ACHN (cell line): ENCODE measurements at regions of chr7 and their contacts with region 1.

Region 1: GRCh38 chr7:116588641-116589594 is 64.1 kb downstream of the CAV1 start:
- DNase-seq: peak; percentile 82

Region 2: DNA sequence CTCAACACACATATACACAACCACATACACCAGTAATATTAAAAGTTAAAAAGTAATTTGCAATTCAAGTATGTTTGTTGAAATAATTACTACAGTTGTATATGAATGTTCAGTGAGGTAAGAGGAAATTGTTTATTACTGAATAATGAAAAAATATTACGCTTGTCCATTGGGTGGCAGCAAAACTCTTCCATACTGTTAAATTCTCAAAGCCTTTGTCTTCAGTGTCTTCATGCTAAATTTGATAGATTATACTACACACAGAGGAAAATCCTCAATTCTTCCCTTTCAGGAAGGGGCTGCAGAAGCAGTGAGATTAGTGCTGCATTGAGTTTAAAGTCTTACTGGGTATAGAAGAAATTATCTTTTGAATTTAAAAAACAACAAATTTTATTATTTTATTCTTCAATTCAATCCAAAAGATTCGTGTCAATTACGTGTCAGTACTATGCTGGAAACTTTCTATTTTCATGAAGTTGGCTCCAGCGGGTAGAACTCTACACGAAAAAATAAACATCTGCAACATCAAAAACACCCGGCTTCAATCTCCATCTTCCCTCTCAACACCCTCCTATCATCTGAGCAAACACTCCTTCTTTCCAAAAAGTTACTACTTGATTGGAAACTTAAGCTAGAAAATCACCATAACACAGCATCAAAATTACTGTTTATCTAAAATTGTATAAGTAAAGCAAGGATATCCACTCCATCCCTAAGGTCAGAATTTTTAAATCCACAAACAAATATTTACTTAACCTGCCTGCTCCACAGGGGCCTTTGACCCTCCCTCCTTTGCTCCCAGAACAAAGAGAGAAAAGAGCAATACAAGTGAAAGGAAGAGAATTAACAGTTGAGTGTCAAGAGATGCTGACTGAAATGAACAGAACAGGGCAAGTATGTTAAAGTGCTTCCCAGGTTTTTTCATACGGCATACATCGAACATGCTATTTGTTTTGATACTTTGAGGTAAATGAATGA is 415.6 kb before region 1 on chr7:
- in situ Hi-C with region 1: loop called (anchors 25 kb)
- DNase-seq: peak; percentile 82

Region 3: DNA sequence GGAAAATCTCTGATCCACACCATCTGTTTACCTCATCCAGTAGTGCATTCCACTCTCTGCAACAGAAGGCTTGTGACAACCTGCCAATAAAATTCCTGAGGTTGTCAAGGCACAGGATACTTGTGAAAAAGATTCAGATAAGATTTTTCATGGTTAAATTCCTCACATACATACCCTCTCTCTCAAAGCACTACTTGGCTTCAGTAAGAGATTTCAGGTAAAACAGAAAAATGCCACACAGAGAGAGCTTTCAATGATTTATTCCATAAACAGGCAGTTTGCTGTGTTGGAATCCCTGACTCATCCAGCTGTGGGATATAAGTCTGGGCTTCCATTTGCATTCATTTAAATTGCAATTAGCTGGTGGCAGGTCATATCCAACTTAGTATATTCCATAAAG is 189.1 kb before region 1 on chr7:
- in situ Hi-C with region 1: no loop called
- DNase-seq: peak; percentile 97

Region 4: DNA sequence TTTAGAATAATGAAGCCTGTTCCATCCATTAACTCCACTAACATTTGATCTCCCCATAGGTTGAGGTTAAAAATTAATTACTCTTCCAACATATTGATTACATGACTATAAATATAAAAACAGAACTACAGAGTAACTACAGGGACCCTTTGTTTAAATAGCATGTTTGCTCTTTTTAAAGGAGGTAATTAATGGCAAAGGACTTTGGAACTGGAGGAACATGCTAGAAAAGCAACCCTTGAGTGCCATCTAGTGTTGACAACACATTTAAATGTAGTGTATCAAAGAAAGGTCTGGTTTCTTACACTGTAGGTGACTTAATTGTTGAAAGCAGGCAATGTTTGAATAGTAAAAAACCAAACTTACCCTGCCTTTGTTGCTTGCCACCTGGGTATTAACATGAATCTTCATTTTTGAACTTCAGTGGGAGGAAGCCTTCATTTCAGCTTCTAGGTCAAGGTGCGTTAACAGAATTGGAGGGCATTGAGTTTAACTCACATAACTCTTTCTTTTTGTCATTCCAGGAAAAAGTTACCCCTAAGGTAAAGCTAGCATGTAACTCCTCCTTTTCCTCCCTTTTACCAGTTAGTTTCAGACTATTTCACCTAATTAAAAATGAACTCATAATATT is 220.8 kb after region 1 on chr7:
- in situ Hi-C with region 1: loop called (anchors 25 kb)
- DNase-seq: peak; percentile 84